ENCODE measurements at regions of chr2 and their contacts with region 1.

Region 1: DNA sequence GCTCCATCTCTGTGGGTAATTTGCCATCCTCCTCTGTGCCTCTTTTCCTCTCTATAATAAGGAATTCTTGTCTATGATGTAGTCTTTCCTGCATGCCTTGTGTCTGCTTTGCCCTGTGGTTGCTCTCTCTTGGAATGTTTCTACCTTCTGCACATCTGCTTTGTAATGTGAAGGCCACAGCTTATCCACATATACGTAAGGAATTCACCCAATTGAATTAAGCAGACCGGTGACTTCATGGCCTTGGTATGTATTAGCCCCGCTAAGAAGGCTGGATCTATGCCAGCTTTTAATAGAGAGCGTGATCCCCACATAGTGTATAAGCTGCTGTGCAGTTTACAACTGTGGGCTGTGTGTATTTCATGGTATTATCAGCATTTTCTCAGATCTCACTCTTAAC is 274.7 kb downstream of the RNF144A start:
- DNase-seq: peak; percentile 99
- H3K4me3 ChIP-seq: no peak overlapping the region
- CTCF ChIP-seq: no peak

Region 2: GRCh38 chr2:7097348-7097895 is 94.5 kb before region 1 on chr2:
- in situ Hi-C with region 1: loop called (anchors 5 kb)
- DNase-seq: peak; percentile 26
- H3K4me3 ChIP-seq: no peak overlapping the region
- CTCF ChIP-seq: peak; percentile 96

Measured in astrocyte of the cerebellum (primary cell).